Pancreas (tissue), 10 donors: ENCODE measurements at regions of chr1 and their contacts with region 1.

Region 1: DNA sequence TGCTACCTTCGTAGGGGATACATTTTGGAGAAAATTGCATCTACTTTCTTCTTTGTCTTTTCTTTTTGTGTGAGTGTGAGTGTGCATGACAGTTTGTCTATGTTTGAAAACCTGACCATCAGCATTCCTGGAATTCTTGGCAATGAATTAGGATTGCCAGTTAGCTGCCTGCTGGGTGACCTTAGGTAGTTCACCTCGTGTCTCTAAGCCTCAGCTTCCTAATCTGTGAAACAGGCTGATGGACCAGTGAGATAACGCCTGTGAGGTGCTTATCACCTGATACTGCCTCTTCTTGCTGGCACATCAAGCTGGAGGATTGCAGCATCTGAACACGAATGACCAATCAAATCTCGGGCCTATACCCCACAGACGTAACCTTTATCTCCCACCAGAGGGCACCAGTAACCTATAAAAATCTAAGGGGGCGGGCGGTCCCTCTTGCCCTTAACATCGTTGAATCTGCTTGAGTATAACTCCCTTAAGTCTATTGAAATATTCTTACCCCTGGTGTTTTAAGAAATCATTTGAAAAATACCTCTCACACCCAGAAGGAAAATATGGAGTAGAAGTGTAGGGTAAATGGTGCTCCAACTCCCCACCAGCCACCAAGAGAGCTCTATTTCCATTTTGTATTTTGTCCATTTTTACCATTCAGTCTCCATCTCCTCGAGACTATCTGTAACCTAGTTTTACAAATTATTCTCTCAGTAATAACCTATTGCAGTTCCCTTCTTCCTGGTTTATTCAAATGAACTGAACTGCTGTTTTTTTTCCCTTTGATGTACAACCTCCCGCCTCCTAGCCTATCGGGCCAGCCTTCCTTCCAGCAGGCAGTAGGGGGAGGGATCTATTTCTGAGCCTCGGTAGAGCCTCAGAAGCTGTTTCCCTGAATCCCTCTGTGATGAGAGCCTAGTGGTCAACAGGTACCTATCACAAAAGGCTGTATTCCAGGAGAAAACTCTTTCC is 49.7 kb downstream of the MDM4 start:
- DNase-seq: peak in 2 of 6 donors; percentile 14 to 44
- ATAC-seq: peak; percentile 67 to 93 (median 85)
- H3K4me3 ChIP-seq: no peak overlapping the region
- H3K27ac ChIP-seq: no peak overlapping the region
- H3K4me1 ChIP-seq: no peaks in the 10 kb centered on the region
- H3K27me3 ChIP-seq: no peaks in the 10 kb centered on the region
- CTCF ChIP-seq: peak in 3 of 4 donors; percentile 18 to 38 (median 38)

Region 2: GRCh38 chr1:204257954-204258752 is 307.7 kb before region 1 on chr1:
- intact Hi-C with region 1: no loop called
- DNase-seq: peak; percentile 46 to 84 (median 64)
- ATAC-seq: peak; percentile 79 to 90 (median 84)
- H3K4me3 ChIP-seq: no peak overlapping the region
- H3K27ac ChIP-seq: no peak overlapping the region
- H3K4me1 ChIP-seq: peaks cover 0 to under 1% (median 0%) of the 10 kb centered on the region in 3 donors
- H3K27me3 ChIP-seq: no peaks in the 10 kb centered on the region
- CTCF ChIP-seq: peak; percentile 40 to 70 (median 58)

Region 3: GRCh38 chr1:204751894-204752687 is 186.2 kb after region 1 on chr1:
- intact Hi-C with region 1: loop called in 1 of 3 experiments (anchors 10 kb)
- DNase-seq: peak in 1 of 6 donors; percentile 45
- ATAC-seq: no peak
- H3K4me3 ChIP-seq: no peak overlapping the region
- H3K27ac ChIP-seq: no peak overlapping the region
- H3K4me1 ChIP-seq: no peaks in the 10 kb centered on the region
- H3K27me3 ChIP-seq: no peaks in the 10 kb centered on the region
- CTCF ChIP-seq: no peak

Region 4: DNA sequence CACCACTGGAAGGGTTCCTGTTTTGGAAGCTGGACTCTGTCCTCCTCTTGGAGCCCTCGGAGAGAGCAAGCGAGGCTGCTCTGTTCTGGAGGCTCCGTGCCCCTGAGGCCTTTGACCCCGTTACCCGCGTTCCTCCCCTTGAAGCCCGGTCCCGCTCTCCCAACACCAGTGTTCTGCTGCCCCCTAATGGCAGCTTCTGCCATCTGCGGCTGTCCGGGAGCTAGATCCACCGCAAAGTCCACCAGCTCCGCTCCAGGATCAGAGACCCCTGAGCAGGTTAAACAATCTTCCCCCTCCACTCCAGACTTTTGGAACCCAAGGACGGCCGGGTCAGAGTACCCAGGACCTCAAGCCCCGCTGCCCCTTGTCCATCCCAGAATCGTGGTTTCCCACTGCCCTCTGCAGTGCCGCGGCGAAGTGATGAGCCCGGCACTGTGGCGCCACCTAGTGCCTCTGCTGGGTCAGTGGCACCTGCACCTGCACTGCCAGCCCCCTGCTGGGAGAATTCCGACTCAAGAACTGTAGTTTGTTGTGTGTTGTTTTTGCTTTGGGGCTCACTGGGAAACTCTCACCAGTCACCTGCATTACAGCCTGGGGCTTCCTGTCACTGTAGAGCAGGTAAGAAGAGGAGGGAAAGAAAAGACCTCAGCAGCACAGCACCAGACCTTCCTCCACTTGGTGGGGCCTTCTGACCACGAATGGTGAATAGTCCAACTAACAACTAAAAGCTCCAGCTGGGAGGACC is 241.2 kb after region 1 on chr1:
- intact Hi-C with region 1: loop called in 1 of 3 experiments (anchors 10 kb)
- DNase-seq: peak; percentile 67 to 90 (median 86)
- ATAC-seq: peak; percentile 98 to 99 (median 98)
- H3K4me3 ChIP-seq: peak overlapping the region in 2 of 4 donors; percentile 33 to 43
- H3K27ac ChIP-seq: no peak overlapping the region
- H3K4me1 ChIP-seq: no peaks in the 10 kb centered on the region
- H3K27me3 ChIP-seq: no peaks in the 10 kb centered on the region
- CTCF ChIP-seq: peak; percentile 90 to 98 (median 98)